Thyroid gland (tissue), 4 donors: ENCODE measurements at regions of chr11 and their contacts with region 1.

Region 1: GRCh38 chr11:111230122-111230465 is 15.4 kb upstream of the POU2AF2 start:
- DNase-seq: no peak
- H3K4me3 ChIP-seq: peak overlapping the region in 1 of 3 donors; percentile 7
- H3K27ac ChIP-seq: no peak overlapping the region
- H3K4me1 ChIP-seq: peaks cover 6% of the 10 kb centered on the region in 2 donors
- H3K27me3 ChIP-seq: no peaks in the 10 kb centered on the region
- CTCF ChIP-seq: no peak
- POLR2A ChIP-seq: no peak

Region 2: DNA sequence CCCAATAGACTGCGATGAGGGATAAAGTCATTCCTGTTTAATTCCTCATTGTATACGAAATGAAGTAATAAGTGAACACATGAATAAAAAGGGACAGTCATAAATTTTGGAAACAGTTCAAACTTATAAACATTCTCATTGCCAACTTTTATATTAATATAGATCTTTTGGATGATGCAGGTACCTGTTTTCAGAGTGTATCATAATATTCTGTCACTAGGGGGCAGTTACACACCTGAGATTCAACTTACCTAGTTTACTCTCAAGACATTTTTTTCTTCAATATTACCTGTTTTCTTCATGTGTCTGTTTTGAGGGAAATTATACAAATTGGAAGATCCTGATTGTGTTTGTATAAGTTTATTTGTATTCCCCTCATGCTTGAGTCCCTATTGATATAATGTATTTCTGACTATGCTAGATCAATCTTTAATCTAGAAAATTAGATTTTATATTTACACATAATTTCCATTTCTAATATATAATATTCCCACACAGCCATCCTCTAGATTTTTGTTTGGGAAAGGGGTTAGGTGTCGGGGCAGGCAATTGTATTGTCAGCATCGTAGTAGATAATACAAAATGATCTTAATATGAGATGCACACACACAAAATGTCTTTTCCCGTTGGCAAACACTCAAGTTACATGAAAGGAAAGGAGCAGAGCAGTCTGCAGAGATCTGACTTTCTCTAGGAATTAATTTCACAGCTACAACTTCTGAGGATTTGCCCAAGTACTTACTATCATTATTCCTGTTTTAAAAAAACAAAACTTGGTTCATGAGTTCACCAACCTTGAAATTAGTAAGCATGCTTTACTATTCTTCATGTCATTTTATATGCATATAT is 782.0 kb before region 1 on chr11:
- intact Hi-C with region 1: loop called (anchors 5 kb)
- DNase-seq: no peak
- H3K4me3 ChIP-seq: no peak overlapping the region
- H3K27ac ChIP-seq: no peak overlapping the region
- H3K4me1 ChIP-seq: peaks cover 8 to 15% of the 10 kb centered on the region in 2 donors
- H3K27me3 ChIP-seq: no peaks in the 10 kb centered on the region
- CTCF ChIP-seq: peak in 5 of 6 experiments; percentile 24 to 73 (median 54)
- POLR2A ChIP-seq: no peak

Region 3: GRCh38 chr11:110711776-110712658 is 518.1 kb before region 1 on chr11 and contains the start of gene ARHGAP20:
- intact Hi-C with region 1: loop called (anchors 5 kb)
- DNase-seq: peak; percentile 86 to 87
- H3K4me3 ChIP-seq: peak within 1 kb of the TSS; percentile 44 to 85 (median 67)
- H3K27ac ChIP-seq: peak within 1 kb of the TSS; percentile 61 to 89 (median 83)
- H3K4me1 ChIP-seq: peaks cover 0 to 5% of the 10 kb centered on the region in 2 donors
- H3K27me3 ChIP-seq: no peaks in the 10 kb centered on the region
- CTCF ChIP-seq: peak in 2 of 6 experiments; percentile 5 to 19
- POLR2A ChIP-seq: peak; percentile 16 to 91
- total RNA-seq, gene ARHGAP20: 10.5 to 19.5 (median 11.8) TPM